ENCODE measurements at regions of chr4 and their contacts with region 1.

Region 1: GRCh38 chr4:98658287-98659105 is at the start of gene TSPAN5:
- DNase-seq: peak; percentile 60 to 90 (median 75)
- ATAC-seq: peak; percentile 87
- H3K4me3 ChIP-seq: peak within 1 kb of the TSS; percentile 61
- H3K4me3 Mint-ChIP-seq: peak within 1 kb of the TSS; percentile 85 to 99 (median 92)
- H3K27ac ChIP-seq: peak within 1 kb of the TSS; percentile 65
- H3K27ac Mint-ChIP-seq: peak within 1 kb of the TSS; percentile 20 to 95 (median 84)
- H3K4me1 ChIP-seq: peaks cover 32 to 40% of the 10 kb centered on the region in 2 donors
- H3K4me1 Mint-ChIP-seq: peaks cover 56 to 87% (median 83%) of the 10 kb centered on the region in 7 donors
- H3K27me3 ChIP-seq: no peaks in the 10 kb centered on the region
- H3K27me3 Mint-ChIP-seq: no peaks in the 10 kb centered on the region
- total RNA-seq, gene TSPAN5: 3.3 to 31.6 (median 10.9) TPM

Region 2: GRCh38 chr4:98467627-98468072 is 190.8 kb before region 1 on chr4:
- CTCF ChIA-PET with region 1: interaction called, 4 read pairs
- POLR2A ChIA-PET with region 1: no interaction called
- intact Hi-C with region 1: loop called (anchors 1 to 5 kb)
- DNase-seq: peak; percentile 14 to 76 (median 65)
- ATAC-seq: peak; percentile 93
- H3K4me3 ChIP-seq: peak overlapping the region; percentile 11
- H3K4me3 Mint-ChIP-seq: peak overlapping the region; percentile 66 to 87 (median 74)
- H3K27ac ChIP-seq: no peak overlapping the region
- H3K27ac Mint-ChIP-seq: peak overlapping the region in 3 of 9 donors; percentile 24 to 34 (median 32)
- H3K4me1 ChIP-seq: no peaks in the 10 kb centered on the region
- H3K4me1 Mint-ChIP-seq: peaks cover 7 to 40% (median 24%) of the 10 kb centered on the region in 7 donors
- H3K27me3 ChIP-seq: no peaks in the 10 kb centered on the region
- H3K27me3 Mint-ChIP-seq: no peaks in the 10 kb centered on the region

Region 3: DNA sequence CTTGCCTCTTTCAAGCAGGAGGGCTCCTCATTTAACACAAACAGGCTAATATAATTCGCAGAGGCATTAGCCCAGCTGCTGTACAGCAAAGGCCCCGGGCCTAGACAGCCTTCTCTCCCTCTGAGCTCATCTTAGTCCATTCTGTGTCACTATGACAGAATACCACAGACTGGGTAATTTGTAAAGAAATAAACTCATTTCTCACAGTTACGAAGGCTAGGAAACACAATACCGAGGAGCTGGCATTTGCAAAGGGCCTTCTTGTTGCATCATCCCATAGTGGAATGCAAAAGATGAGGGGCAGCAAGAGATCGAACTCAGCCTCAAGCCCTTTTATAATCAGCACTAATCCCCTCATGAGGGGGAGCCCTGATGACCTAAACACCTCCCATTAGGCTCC is 48.6 kb before region 1 on chr4:
- CTCF ChIA-PET with region 1: no interaction called
- POLR2A ChIA-PET with region 1: no interaction called
- intact Hi-C with region 1: loop called in 1 of 2 experiments (anchors 5 kb)
- DNase-seq: no peak
- ATAC-seq: no peak
- H3K4me3 ChIP-seq: no peak overlapping the region
- H3K4me3 Mint-ChIP-seq: no peak overlapping the region
- H3K27ac ChIP-seq: no peak overlapping the region
- H3K27ac Mint-ChIP-seq: no peak overlapping the region
- H3K4me1 ChIP-seq: peaks cover 4 to 7% of the 10 kb centered on the region in 2 donors
- H3K4me1 Mint-ChIP-seq: peaks cover 24 to 68% (median 51%) of the 10 kb centered on the region in 7 donors
- H3K27me3 ChIP-seq: no peaks in the 10 kb centered on the region
- H3K27me3 Mint-ChIP-seq: no peaks in the 10 kb centered on the region

Region 4: GRCh38 chr4:98688411-98689290 is 30.2 kb after region 1 on chr4:
- CTCF ChIA-PET with region 1: no interaction called
- POLR2A ChIA-PET with region 1: interaction called, 10 read pairs
- intact Hi-C with region 1: loop called (anchors 1 kb)
- DNase-seq: peak in 7 of 9 donors; percentile 12 to 63 (median 45)
- ATAC-seq: peak; percentile 71
- H3K4me3 ChIP-seq: no peak overlapping the region
- H3K4me3 Mint-ChIP-seq: peak overlapping the region; percentile 31 to 69 (median 60)
- H3K27ac ChIP-seq: no peak overlapping the region
- H3K27ac Mint-ChIP-seq: peak overlapping the region; percentile 22 to 84 (median 71)
- H3K4me1 ChIP-seq: peaks cover 14 to 36% of the 10 kb centered on the region in 2 donors
- H3K4me1 Mint-ChIP-seq: peaks cover 21 to 71% (median 53%) of the 10 kb centered on the region in 7 donors
- H3K27me3 ChIP-seq: no peaks in the 10 kb centered on the region
- H3K27me3 Mint-ChIP-seq: no peaks in the 10 kb centered on the region

Region 5: DNA sequence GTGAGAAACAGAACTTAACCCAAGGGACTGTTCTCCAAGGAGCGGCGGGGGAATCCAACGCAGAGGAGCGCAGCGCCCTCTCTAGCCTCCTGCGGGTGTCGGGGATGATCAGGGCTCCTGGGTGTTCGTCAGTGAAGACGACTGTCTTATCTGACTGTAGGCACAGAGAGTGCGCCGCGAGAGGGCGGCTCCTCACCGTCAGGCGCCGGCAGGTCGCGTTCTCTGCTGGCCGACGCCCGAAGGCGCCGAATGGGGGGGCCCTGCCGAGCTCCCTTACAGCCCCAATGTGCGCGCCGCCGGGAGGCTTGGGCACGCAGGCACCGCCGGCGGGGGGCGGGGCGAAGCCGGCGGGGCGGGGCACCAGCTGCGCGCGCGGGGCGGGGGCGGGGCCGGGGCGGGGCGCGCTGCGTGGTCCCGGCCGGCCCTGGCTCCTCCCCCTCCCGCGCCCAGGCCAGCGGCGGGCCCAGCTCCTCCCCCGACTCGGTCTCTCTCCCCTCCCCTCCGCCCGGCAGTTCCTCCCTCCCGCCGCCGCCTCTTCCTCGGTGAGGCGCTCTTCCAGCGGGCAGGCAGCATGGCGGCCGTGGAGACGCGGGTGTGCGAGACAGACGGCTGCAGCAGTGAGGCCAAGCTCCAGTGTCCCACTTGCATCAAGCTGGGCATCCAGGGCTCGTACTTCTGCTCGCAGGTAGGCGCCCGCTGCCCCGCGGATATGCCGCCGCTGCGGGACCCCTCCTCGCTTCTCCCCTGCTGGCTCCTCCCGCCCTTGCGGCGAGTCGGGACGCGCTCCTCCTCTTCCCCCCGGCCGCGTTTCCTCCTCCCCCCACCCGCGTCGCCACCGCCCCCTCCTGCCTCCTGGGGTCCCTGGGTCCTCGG is 336.9 kb after region 1 on chr4 and contains the start of gene METAP1:
- CTCF ChIA-PET with region 1: no interaction called
- POLR2A ChIA-PET with region 1: interaction called, 3 read pairs
- intact Hi-C with region 1: loop called (anchors 1 kb)
- DNase-seq: peak; percentile 94 to 97 (median 96)
- ATAC-seq: peak; percentile 90
- H3K4me3 ChIP-seq: peak within 1 kb of the TSS; percentile 91
- H3K4me3 Mint-ChIP-seq: peak within 1 kb of the TSS; percentile 79 to 98 (median 94)
- H3K27ac ChIP-seq: peak within 1 kb of the TSS; percentile 92
- H3K27ac Mint-ChIP-seq: peak within 1 kb of the TSS; percentile 97 to 99 (median 99)
- H3K4me1 ChIP-seq: peaks cover 10 to 13% of the 10 kb centered on the region in 2 donors
- H3K4me1 Mint-ChIP-seq: peaks cover 28 to 49% (median 42%) of the 10 kb centered on the region in 7 donors
- H3K27me3 ChIP-seq: no peaks in the 10 kb centered on the region
- H3K27me3 Mint-ChIP-seq: no peaks in the 10 kb centered on the region
- total RNA-seq, gene METAP1: 29.1 to 50.7 (median 40.2) TPM

Region 6: GRCh38 chr4:99563310-99564186 is 905.1 kb after region 1 on chr4 and contains the start of gene TRMT10A:
- CTCF ChIA-PET with region 1: no interaction called
- POLR2A ChIA-PET with region 1: no interaction called
- intact Hi-C with region 1: loop called (anchors 2 to 5 kb)
- DNase-seq: peak; percentile 79 to 98 (median 98)
- ATAC-seq: peak; percentile 91
- H3K4me3 ChIP-seq: peak within 1 kb of the TSS; percentile 92
- H3K4me3 Mint-ChIP-seq: peak within 1 kb of the TSS; percentile 77 to 99 (median 98)
- H3K27ac ChIP-seq: peak within 1 kb of the TSS; percentile 91
- H3K27ac Mint-ChIP-seq: peak within 1 kb of the TSS; percentile 98 to 100 (median 100)
- H3K4me1 ChIP-seq: no peaks in the 10 kb centered on the region
- H3K4me1 Mint-ChIP-seq: peaks cover 0 to 33% (median 28%) of the 10 kb centered on the region in 7 donors
- H3K27me3 ChIP-seq: no peaks in the 10 kb centered on the region
- H3K27me3 Mint-ChIP-seq: peaks cover 13 to 29% (median 23%) of the 10 kb centered on the region in 5 donors
- total RNA-seq, gene TRMT10A: 3.9 to 9.1 (median 7.7) TPM